Breast epithelium (tissue), 4 donors: ENCODE measurements at regions of chr2 and their contacts with region 1.

Region 1: DNA sequence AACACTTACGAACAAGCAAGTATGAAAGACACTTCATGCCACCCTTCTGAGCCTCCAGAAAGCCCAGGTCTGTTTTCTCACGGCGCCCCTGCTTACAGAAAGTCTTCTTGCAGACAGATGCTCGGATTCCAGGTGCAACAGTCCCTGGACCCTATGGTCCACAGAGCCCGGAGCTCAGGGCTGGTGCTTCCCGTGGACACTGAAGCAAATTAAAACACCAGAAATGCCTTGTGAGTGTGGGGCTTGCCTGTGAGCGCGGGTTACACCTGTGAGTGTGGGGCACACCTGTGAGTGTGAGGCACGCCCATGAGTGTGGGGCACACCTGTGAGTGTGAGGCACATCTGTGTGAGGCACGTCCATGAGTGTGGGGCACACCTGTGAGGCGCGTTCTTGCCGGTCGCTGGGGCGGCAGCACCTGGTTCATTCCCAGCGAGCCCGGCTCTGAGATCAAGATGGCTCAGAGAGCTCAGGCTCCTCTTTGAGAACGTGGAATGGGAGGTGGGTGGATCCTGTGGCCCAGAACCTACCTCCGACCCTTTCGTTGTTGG is 205.2 kb upstream of the TPO start:
- DNase-seq: no peak
- H3K4me3 ChIP-seq: no peak overlapping the region
- H3K27ac ChIP-seq: no peak overlapping the region
- H3K4me1 ChIP-seq: no peaks in the 10 kb centered on the region
- H3K27me3 ChIP-seq: no peaks in the 10 kb centered on the region
- CTCF ChIP-seq: no peak
- POLR2A ChIP-seq: no peak

Region 2: GRCh38 chr2:1193801-1194200 is 14.2 kb before region 1 on chr2:
- intact Hi-C with region 1: loop called (anchors 2 kb)
- DNase-seq: no peak
- H3K4me3 ChIP-seq: no peak overlapping the region
- H3K27ac ChIP-seq: no peak overlapping the region
- H3K4me1 ChIP-seq: no peaks in the 10 kb centered on the region
- H3K27me3 ChIP-seq: no peaks in the 10 kb centered on the region
- CTCF ChIP-seq: no peak
- POLR2A ChIP-seq: no peak